B cell (primary cell): ENCODE measurements at regions of chr10 and their contacts with region 1.

Region 1: DNA sequence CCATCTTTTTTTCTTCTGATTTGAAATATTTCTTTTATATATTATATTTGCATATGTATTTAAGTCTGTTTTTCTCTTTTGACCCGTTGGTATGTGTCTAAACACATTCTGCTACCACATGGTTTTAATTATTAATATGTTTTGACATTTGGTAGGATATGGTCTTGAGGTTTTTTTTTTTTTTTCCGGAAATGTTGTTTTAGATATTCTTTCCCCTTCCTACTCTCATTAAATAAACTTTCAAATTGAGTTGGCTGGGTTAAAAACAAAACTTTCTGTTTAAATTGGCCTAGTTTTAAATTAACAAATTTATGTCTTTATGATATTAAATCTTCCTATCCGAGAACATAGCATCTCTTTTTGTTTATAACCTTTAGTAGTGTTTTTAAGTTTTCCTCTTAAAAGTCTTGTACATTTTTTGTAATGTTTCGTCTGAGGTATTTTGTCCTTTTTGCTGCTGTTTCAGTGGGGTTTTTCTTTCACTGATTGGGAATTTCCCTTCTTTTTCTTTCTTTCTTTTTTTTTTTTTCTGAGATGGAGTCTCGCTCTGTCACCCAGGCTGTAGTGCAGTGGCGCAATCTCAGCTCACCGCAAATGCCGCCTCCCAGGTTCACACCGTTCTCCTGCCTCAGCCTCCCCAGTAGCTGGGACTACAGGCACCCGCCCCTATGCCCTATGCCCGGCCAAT is 25.4 kb downstream of the STAM start:
- DNase-seq: peak; percentile 57
- ATAC-seq: peak; percentile 79
- H3K4me3 ChIP-seq: peak overlapping the region in 3 of 5 experiments; percentile 10 to 49 (median 18)
- H3K4me3 Mint-ChIP-seq: peak overlapping the region; percentile 82
- H3K27ac ChIP-seq: peak overlapping the region; percentile 15 to 68
- H3K27ac Mint-ChIP-seq: peak overlapping the region; percentile 73
- H3K4me1 ChIP-seq: peaks cover 10 to 11% of the 10 kb centered on the region in 2 donors
- H3K4me1 Mint-ChIP-seq: peaks cover 35% of the 10 kb centered on the region
- H3K27me3 ChIP-seq: no peaks in the 10 kb centered on the region
- H3K27me3 Mint-ChIP-seq: no peaks in the 10 kb centered on the region
- CTCF ChIP-seq: no peak

Region 2: GRCh38 chr10:17562614-17563013 is 106.7 kb before region 1 on chr10:
- CTCF ChIA-PET with region 1: no interaction called
- POLR2A ChIA-PET with region 1: no interaction called
- intact Hi-C with region 1: no loop called
- DNase-seq: no peak
- ATAC-seq: no peak
- H3K4me3 ChIP-seq: no peak overlapping the region
- H3K4me3 Mint-ChIP-seq: no peak overlapping the region
- H3K27ac ChIP-seq: no peak overlapping the region
- H3K27ac Mint-ChIP-seq: no peak overlapping the region
- H3K4me1 ChIP-seq: peaks cover 0 to 5% of the 10 kb centered on the region in 2 donors
- H3K4me1 Mint-ChIP-seq: peaks cover 8% of the 10 kb centered on the region
- H3K27me3 ChIP-seq: no peaks in the 10 kb centered on the region
- H3K27me3 Mint-ChIP-seq: peaks cover 3% of the 10 kb centered on the region
- CTCF ChIP-seq: no peak

Region 3: GRCh38 chr10:17655567-17656146 is 13.7 kb before region 1 on chr10:
- CTCF ChIA-PET with region 1: no interaction called
- POLR2A ChIA-PET with region 1: interaction called, 5 read pairs
- intact Hi-C with region 1: loop called (anchors 2 kb)
- DNase-seq: peak; percentile 49
- ATAC-seq: peak; percentile 84
- H3K4me3 ChIP-seq: peak overlapping the region in 1 of 5 experiments; percentile 21
- H3K4me3 Mint-ChIP-seq: peak overlapping the region; percentile 29
- H3K27ac ChIP-seq: peak overlapping the region; percentile 47 to 48
- H3K27ac Mint-ChIP-seq: peak overlapping the region; percentile 11
- H3K4me1 ChIP-seq: peaks cover 7 to 11% of the 10 kb centered on the region in 2 donors
- H3K4me1 Mint-ChIP-seq: peaks cover 50% of the 10 kb centered on the region
- H3K27me3 ChIP-seq: no peaks in the 10 kb centered on the region
- H3K27me3 Mint-ChIP-seq: no peaks in the 10 kb centered on the region
- CTCF ChIP-seq: no peak

Region 4: GRCh38 chr10:17684537-17684936 is 15.2 kb after region 1 on chr10:
- CTCF ChIA-PET with region 1: interaction called, 3 read pairs
- POLR2A ChIA-PET with region 1: no interaction called
- intact Hi-C with region 1: loop called (anchors 2 kb)
- DNase-seq: no peak
- ATAC-seq: no peak
- H3K4me3 ChIP-seq: no peak overlapping the region
- H3K4me3 Mint-ChIP-seq: peak overlapping the region; percentile 32
- H3K27ac ChIP-seq: no peak overlapping the region
- H3K27ac Mint-ChIP-seq: no peak overlapping the region
- H3K4me1 ChIP-seq: peaks cover 3 to 14% of the 10 kb centered on the region in 2 donors
- H3K4me1 Mint-ChIP-seq: peaks cover 34% of the 10 kb centered on the region
- H3K27me3 ChIP-seq: no peaks in the 10 kb centered on the region
- H3K27me3 Mint-ChIP-seq: no peaks in the 10 kb centered on the region
- CTCF ChIP-seq: no peak